GM23248 (cell line): ENCODE measurements at regions of chr20 and their contacts with region 1.

Region 1: GRCh38 chr20:10982692-10983091 is 308.9 kb upstream of the JAG1 start:
- DNase-seq: peak; percentile 96
- H3K4me3 ChIP-seq: peak overlapping the region; percentile 14; the same call in 1 of the 2 replicates
- H3K27ac ChIP-seq: peak overlapping the region; percentile 54
- H3K4me1 ChIP-seq: peaks cover 15% of the 10 kb centered on the region
- H3K27me3 ChIP-seq: no peaks in the 10 kb centered on the region

Region 2: DNA sequence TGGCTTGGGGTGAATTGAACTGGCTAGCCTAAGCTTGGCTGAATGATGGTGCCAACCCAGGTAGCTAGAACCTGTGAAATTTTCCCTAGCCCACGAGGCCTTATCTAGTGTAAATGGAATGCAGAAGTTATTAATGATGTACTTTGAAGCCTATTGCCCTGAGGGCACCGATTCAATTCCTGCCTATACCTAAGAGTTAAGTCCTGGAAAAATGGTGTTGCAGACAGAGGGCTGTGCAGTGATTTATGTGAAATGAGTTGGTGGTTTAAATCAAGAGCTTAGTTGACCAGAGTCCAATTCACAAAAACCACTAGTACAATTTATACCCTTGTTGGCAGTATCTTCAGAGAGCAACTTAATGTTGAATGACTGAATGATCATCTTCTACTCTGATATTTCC is 64.9 kb after region 1 on chr20:
- in situ Hi-C with region 1: loop called (anchors 10 kb)
- DNase-seq: no peak
- H3K4me3 ChIP-seq: no peak overlapping the region
- H3K27ac ChIP-seq: no peak overlapping the region
- H3K4me1 ChIP-seq: no peaks in the 10 kb centered on the region
- H3K27me3 ChIP-seq: no peaks in the 10 kb centered on the region; the same call in 1 of the 2 replicates